Gastrocnemius medialis (tissue), 4 donors: ENCODE measurements at regions of chr10 and their contacts with region 1.

Region 1: GRCh38 chr10:72692057-72692910 is at the start of gene MCU:
- DNase-seq: peak; percentile 96 to 97
- ATAC-seq: peak; percentile 53 to 70
- H3K4me3 ChIP-seq: peak within 1 kb of the TSS; percentile 79 to 94 (median 84)
- H3K27ac ChIP-seq: peak within 1 kb of the TSS; percentile 89 to 96 (median 92)
- H3K4me1 ChIP-seq: peaks cover 43 to 55% of the 10 kb centered on the region in 2 donors
- H3K27me3 ChIP-seq: no peaks in the 10 kb centered on the region
- CTCF ChIP-seq: no peak
- POLR2A ChIP-seq: peak; percentile 87 to 95
- total RNA-seq, gene MCU: 25.1 to 61.3 (median 49.0) TPM

Region 2: DNA sequence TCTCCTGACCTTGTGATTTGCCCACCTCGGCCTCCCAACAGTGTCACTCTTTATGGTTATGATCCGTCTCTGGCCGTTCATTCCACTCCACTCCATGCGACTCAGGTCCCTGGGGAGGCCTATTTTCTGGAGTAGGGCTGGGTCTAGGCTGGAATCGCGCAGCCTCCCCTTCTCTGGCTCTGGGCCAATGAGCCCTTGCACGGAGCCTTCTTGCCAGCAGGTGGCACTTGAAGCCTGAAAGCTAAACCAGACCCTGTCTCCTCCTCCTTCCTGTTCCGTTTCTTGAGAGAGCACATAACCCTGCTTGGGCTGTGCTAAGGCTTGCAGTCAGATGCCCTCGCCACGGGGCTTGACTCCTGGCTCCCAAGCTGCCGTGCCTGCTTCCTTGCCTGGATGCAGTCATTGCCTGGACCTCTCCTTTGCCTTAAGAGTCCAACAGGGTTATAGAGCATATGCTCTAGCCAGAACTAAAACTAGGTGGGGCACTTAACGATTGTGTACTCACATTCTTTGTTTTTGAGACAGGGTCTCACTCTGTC is 328.0 kb before region 1 on chr10:
- in situ Hi-C with region 1: loop called in 3 of 4 experiments (anchors 25 kb)
- intact Hi-C with region 1: loop called (anchors 5 kb)
- DNase-seq: peak; percentile 66 to 81
- ATAC-seq: peak; percentile 90 to 98
- H3K4me3 ChIP-seq: peak overlapping the region in 2 of 4 donors; percentile 22 to 39
- H3K27ac ChIP-seq: peak overlapping the region in 3 of 4 donors; percentile 13 to 62 (median 34)
- H3K4me1 ChIP-seq: peaks cover 5 to 9% of the 10 kb centered on the region in 2 donors
- H3K27me3 ChIP-seq: no peaks in the 10 kb centered on the region
- CTCF ChIP-seq: peak; percentile 85 to 93 (median 90)
- POLR2A ChIP-seq: no peak

Region 3: GRCh38 chr10:72740528-72740927 is 48.2 kb after region 1 on chr10:
- in situ Hi-C with region 1: no loop called
- intact Hi-C with region 1: loop called (anchors 2 kb)
- DNase-seq: peak; percentile 65 to 73
- ATAC-seq: peak; percentile 90 to 95
- H3K4me3 ChIP-seq: no peak overlapping the region
- H3K27ac ChIP-seq: peak overlapping the region; percentile 83 to 90 (median 86)
- H3K4me1 ChIP-seq: peaks cover 73 to 74% of the 10 kb centered on the region in 2 donors
- H3K27me3 ChIP-seq: no peaks in the 10 kb centered on the region
- CTCF ChIP-seq: no peak
- POLR2A ChIP-seq: no peak

Region 4: DNA sequence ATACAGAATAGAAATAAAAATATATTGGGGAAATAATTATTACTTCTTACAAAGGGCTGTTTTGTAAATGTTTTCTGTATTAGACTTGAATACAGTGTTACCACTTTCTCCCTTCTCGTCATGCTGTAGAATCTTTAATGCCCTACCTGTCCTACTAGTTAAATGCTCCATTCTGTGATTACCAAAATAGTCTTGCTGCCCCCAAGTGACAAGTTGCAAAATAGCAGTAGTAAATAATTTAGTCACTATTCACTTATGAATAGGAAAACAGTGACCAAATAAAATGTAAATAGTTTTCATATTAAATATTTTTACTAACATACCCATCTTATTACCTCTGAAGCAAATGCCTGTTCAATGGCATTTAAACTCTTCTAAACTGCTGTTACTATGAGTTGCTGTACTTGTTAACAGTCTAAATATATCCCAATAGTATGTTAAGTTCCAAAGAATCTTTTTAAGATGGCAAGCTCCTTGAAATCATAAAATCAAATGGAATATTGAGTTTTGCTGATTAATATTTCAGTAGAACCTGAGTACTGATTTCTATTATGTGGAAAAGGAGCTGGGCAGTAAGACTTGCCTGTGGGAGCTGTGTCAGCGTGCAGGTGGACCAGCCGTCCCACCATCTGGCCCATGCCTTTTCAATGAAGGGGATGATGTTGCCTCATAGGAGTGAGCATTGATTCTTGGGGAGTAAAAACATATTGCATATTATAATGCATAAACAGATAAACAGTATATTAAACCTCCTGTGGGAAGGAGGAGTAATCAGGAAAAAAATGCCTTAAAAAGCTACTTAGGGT is 183.2 kb after region 1 on chr10:
- in situ Hi-C with region 1: no loop called
- intact Hi-C with region 1: loop called (anchors 1 kb)
- DNase-seq: no peak
- ATAC-seq: peak in 1 of 2 donors; percentile 61
- H3K4me3 ChIP-seq: no peak overlapping the region
- H3K27ac ChIP-seq: no peak overlapping the region
- H3K4me1 ChIP-seq: no peaks in the 10 kb centered on the region
- H3K27me3 ChIP-seq: no peaks in the 10 kb centered on the region
- CTCF ChIP-seq: peak in 4 of 5 experiments; percentile 20 to 57 (median 36)
- POLR2A ChIP-seq: no peak

Region 5: DNA sequence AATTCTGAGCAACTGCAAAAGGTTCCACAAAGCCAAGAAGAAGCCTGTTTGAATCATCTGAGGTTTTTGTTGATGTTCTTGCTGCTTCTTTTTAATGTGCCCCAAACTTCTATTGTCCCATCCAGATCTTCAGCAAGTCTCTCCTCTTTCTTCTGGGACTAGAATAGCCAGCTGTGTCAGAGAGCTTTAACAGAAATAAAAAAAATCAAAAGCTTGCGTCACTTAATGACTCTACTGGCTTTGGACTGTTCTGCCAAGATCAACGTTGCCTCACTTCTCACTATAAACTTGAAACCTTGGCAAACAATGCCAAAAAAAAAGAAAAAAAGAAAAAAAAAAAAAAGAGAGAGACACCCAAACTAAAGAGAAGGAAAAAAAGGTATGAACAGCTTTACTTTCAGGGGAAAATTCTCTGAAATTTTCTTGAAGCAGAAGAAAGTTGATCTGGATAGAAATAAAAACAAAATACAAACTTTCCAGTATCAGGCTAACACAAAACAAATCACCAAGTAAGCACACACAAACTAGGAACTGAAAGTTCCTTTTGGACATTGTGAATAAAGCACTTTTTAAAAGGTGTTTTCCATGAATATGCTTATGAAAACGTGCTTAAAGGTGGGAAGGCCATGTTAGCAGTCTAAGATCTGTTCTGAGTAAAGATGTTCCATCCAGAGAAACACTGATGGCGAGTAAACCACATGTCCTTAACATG is 884.0 kb after region 1 on chr10:
- in situ Hi-C with region 1: no loop called
- intact Hi-C with region 1: loop called (anchors 5 kb)
- DNase-seq: peak; percentile 52 to 59
- ATAC-seq: peak; percentile 82 to 85
- H3K4me3 ChIP-seq: peak overlapping the region; percentile 56 to 83 (median 68)
- H3K27ac ChIP-seq: peak overlapping the region; percentile 86 to 91 (median 88)
- H3K4me1 ChIP-seq: peaks cover 34 to 36% of the 10 kb centered on the region in 2 donors
- H3K27me3 ChIP-seq: no peaks in the 10 kb centered on the region
- CTCF ChIP-seq: no peak
- POLR2A ChIP-seq: peak; percentile 92 to 96